Vagina (tissue), 2 donors: ENCODE measurements at regions of chr20 and their contacts with region 1.

Region 1: GRCh38 chr20:1631309-1632151 is 11.7 kb upstream of the SIRPB1 start:
- DNase-seq: peak in 1 of 2 donors; percentile 54
- H3K4me3 ChIP-seq: no peak overlapping the region
- H3K27ac ChIP-seq: no peak overlapping the region
- H3K4me1 ChIP-seq: no peaks in the 10 kb centered on the region
- H3K27me3 ChIP-seq: no peaks in the 10 kb centered on the region
- CTCF ChIP-seq: no peak
- POLR2A ChIP-seq: no peak

Region 2: GRCh38 chr20:1524004-1524403 is 107.5 kb before region 1 on chr20:
- intact Hi-C with region 1: no loop called
- DNase-seq: no peak
- H3K4me3 ChIP-seq: no peak overlapping the region
- H3K27ac ChIP-seq: no peak overlapping the region
- H3K4me1 ChIP-seq: no peaks in the 10 kb centered on the region
- H3K27me3 ChIP-seq: no peaks in the 10 kb centered on the region
- CTCF ChIP-seq: no peak
- POLR2A ChIP-seq: no peak

Region 3: DNA sequence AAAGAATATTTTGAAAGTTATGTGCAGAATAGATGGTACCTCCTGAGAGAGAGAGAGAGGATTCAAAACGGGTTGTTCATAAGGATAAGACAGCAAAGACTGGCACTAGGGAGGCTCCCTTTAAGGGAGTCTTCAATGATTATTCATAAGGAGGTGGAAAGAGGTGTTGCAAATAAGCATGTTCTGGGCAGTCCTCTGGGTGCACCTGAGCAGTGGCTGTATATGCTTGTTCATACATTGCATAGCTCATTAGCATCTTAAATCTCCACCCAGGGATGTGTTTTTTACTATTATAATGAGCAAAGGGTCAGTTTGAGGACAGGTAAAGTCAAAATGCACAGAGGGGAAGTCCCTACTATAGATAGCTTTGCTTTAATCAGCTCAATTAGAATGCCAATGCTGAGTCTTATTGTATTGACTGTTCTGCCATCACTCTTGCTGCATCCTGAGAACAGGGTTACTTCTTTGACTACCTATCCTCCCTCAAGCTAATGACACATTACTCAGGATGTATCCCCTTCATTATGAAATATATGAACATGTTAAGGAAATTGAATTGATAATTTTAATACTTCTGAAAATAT is 36.1 kb after region 1 on chr20:
- intact Hi-C with region 1: loop called (anchors 1 kb)
- DNase-seq: no peak
- H3K4me3 ChIP-seq: no peak overlapping the region
- H3K27ac ChIP-seq: no peak overlapping the region
- H3K4me1 ChIP-seq: no peaks in the 10 kb centered on the region
- H3K27me3 ChIP-seq: no peaks in the 10 kb centered on the region
- CTCF ChIP-seq: no peak
- POLR2A ChIP-seq: no peak